ENCODE measurements at regions of chr6 and their contacts with region 1.

Region 1: GRCh38 chr6:120056085-120056484 is 706.5 kb upstream of the MAN1A1 start:
- DNase-seq: no peak

Region 2: DNA sequence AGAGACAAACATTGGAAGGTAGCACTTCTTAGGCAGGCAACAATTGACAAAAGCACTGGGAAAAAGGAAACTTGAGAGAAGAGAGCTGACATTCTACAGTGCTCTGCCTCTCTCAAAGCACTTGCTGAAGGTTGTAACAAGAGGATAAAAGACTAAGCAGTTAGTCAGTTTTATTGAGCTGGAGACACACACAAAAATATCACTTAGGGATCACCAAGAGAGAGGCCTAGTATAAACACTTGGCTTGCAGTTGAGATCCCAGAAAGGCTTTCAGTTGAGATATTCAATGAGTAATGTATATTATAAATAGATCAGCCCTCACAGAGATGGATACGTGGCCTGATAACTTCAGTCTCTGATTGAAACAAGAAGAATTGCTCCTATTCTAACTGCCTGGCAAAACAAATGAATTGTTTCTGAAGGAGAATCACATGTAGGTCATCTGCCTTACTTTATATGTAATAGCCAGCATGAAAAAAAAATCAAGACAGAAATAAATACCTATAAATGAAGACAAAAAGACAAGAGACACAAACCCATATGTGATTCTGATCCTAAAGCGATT is 40.7 kb after region 1 on chr6:
- intact Hi-C with region 1: loop called in 1 of 2 experiments (anchors 2 kb)
- DNase-seq: no peak

Region 3: GRCh38 chr6:120108061-120108795 is 52.1 kb after region 1 on chr6:
- intact Hi-C with region 1: no loop called
- DNase-seq: no peak

Region 4: GRCh38 chr6:120431841-120432240 is 375.8 kb after region 1 on chr6:
- intact Hi-C with region 1: no loop called
- DNase-seq: no peak